ENCODE measurements at regions of chr13 and their contacts with region 1.

Region 1: DNA sequence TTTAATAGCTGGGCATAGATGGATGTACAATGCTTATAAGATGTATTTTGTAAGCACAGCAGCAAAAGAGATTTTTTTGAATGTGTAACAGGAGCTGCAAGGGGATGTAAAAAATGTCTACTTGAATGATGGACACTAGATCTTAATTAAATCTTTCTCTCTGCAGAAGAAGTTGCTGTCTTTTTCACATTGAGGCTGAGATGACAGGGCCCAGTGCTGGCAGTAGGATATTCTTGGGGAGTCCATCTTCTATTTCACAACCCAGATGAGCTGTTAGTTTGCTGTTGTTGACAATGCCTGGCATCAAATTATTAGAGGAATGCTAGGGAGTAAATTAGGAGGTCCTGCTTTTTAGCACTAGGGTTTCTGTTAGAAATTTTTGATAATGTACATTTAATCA is 698.7 kb downstream of the SLITRK5 start:
- DNase-seq: no peak
- ATAC-seq: no peak
- H3K4me3 ChIP-seq: no peak overlapping the region
- H3K4me3 Mint-ChIP-seq: no peak overlapping the region
- H3K27ac ChIP-seq: no peak overlapping the region
- H3K27ac Mint-ChIP-seq: no peak overlapping the region
- H3K4me1 ChIP-seq: no peaks in the 10 kb centered on the region
- H3K4me1 Mint-ChIP-seq: no peaks in the 10 kb centered on the region
- H3K27me3 ChIP-seq: no peaks in the 10 kb centered on the region
- H3K27me3 Mint-ChIP-seq: no peaks in the 10 kb centered on the region
- CTCF ChIP-seq: no peak

Region 2: GRCh38 chr13:88257706-88258105 is 112.2 kb before region 1 on chr13:
- CTCF ChIA-PET with region 1: no interaction called
- POLR2A ChIA-PET with region 1: no interaction called
- intact Hi-C with region 1: no loop called
- DNase-seq: no peak
- ATAC-seq: no peak
- H3K4me3 ChIP-seq: no peak overlapping the region
- H3K4me3 Mint-ChIP-seq: no peak overlapping the region
- H3K27ac ChIP-seq: no peak overlapping the region
- H3K27ac Mint-ChIP-seq: no peak overlapping the region
- H3K4me1 ChIP-seq: no peaks in the 10 kb centered on the region
- H3K4me1 Mint-ChIP-seq: no peaks in the 10 kb centered on the region
- H3K27me3 ChIP-seq: no peaks in the 10 kb centered on the region
- H3K27me3 Mint-ChIP-seq: no peaks in the 10 kb centered on the region
- CTCF ChIP-seq: no peak

Region 3: DNA sequence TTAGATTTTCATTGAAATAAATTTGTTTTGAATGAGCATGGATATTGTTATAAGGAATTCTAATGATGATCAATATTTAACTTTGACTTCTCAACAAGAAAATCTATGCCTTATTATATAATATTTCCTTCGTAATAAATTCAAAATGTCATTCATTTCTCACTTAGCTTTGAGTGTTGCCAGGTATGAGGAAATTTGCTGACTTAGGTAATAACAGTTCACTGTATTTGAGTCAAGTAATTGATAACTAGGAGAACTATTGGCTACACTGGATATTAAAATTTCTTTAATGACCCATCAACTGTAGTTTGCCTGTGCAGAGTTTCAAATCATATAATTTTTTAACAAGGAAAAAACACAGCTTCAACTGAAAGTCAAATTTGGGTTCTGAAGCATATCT is 47.9 kb after region 1 on chr13:
- CTCF ChIA-PET with region 1: no interaction called
- POLR2A ChIA-PET with region 1: no interaction called
- intact Hi-C with region 1: loop called in 1 of 2 experiments (anchors 2 kb)
- DNase-seq: no peak
- ATAC-seq: no peak
- H3K4me3 ChIP-seq: no peak overlapping the region
- H3K4me3 Mint-ChIP-seq: no peak overlapping the region
- H3K27ac ChIP-seq: no peak overlapping the region
- H3K27ac Mint-ChIP-seq: no peak overlapping the region
- H3K4me1 ChIP-seq: no peaks in the 10 kb centered on the region
- H3K4me1 Mint-ChIP-seq: no peaks in the 10 kb centered on the region
- H3K27me3 ChIP-seq: no peaks in the 10 kb centered on the region
- H3K27me3 Mint-ChIP-seq: no peaks in the 10 kb centered on the region
- CTCF ChIP-seq: no peak

Region 4: GRCh38 chr13:88544836-88545235 is 175.0 kb after region 1 on chr13:
- CTCF ChIA-PET with region 1: no interaction called
- POLR2A ChIA-PET with region 1: no interaction called
- intact Hi-C with region 1: no loop called
- DNase-seq: no peak
- ATAC-seq: no peak
- H3K4me3 ChIP-seq: no peak overlapping the region
- H3K4me3 Mint-ChIP-seq: no peak overlapping the region
- H3K27ac ChIP-seq: no peak overlapping the region
- H3K27ac Mint-ChIP-seq: no peak overlapping the region
- H3K4me1 ChIP-seq: no peaks in the 10 kb centered on the region
- H3K4me1 Mint-ChIP-seq: no peaks in the 10 kb centered on the region
- H3K27me3 ChIP-seq: no peaks in the 10 kb centered on the region
- H3K27me3 Mint-ChIP-seq: no peaks in the 10 kb centered on the region
- CTCF ChIP-seq: no peak